Gastrocnemius medialis (tissue), 4 donors: ENCODE measurements at regions of chr11 and their contacts with region 1.

Region 1: DNA sequence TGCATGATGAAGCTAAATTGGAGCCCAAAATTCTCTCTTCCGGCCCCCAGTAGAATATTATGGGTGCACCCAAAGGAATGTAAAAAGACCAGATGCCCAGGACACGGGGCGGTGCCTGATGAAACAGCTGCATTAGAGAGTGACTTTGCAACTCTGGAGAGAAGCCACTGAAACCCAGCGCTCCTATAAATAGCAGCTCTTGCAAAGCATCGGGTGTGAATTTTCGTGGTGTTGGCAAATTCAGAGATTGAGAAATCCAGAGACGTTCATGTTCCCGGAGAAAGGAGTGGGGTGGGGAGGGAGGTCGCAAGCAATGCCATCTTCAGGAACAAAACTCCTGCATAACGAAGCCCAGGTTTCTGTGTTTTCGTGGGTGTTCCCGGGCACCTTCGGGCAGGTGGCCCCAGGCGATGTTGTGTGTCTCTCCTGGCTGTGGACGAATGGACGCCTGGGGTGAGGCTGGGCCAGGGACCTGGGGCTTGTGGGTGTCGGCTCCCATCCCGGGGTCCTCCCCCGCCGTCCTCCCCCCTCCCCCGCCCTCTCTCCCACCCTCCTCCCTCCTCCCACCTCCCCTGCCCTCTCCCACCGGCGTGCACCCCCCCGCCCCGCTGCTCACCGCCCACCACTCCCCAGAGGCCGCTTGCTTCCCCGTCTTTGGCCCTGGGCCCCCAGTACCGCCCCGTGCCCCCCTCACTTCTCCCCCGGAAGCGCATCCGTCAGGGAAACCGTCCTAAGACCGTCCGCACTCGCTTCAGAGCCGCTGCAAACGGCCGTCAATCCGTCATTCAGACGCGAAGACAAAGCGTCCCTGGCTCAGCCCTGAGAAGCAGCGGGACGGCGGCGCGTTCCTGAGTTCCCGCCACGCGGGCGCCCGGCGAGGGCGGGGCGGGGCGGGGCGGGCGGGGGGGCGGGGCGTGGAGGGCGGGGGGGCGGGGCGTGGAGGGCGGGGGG is 26.7 kb upstream of the TOLLIP start:
- DNase-seq: peak; percentile 91 to 96
- ATAC-seq: peak; percentile 95
- H3K4me3 ChIP-seq: peak overlapping the region; percentile 53 to 86 (median 61)
- H3K27ac ChIP-seq: peak overlapping the region; percentile 89 to 98 (median 94)
- H3K4me1 ChIP-seq: peaks cover 11 to 12% of the 10 kb centered on the region in 2 donors
- H3K27me3 ChIP-seq: peaks cover 0 to 2% (median 0%) of the 10 kb centered on the region in 3 donors
- CTCF ChIP-seq: no peak
- POLR2A ChIP-seq: peak; percentile 70 to 76

Region 2: GRCh38 chr11:1262172-1263006 is 73.7 kb before region 1 on chr11:
- in situ Hi-C with region 1: no loop called
- intact Hi-C with region 1: loop called (anchors 5 kb)
- DNase-seq: peak; percentile 86 to 91
- ATAC-seq: peak; percentile 84 to 94
- H3K4me3 ChIP-seq: peak overlapping the region; percentile 58 to 69 (median 64)
- H3K27ac ChIP-seq: peak overlapping the region; percentile 79 to 87 (median 83)
- H3K4me1 ChIP-seq: peaks cover 4 to 18% of the 10 kb centered on the region in 2 donors
- H3K27me3 ChIP-seq: no peaks in the 10 kb centered on the region
- CTCF ChIP-seq: no peak
- POLR2A ChIP-seq: peak; percentile 50 to 52

Region 3: GRCh38 chr11:1375161-1375954 is 39.3 kb after region 1 on chr11:
- in situ Hi-C with region 1: no loop called
- intact Hi-C with region 1: no loop called
- DNase-seq: no peak
- ATAC-seq: no peak
- H3K4me3 ChIP-seq: no peak overlapping the region
- H3K27ac ChIP-seq: no peak overlapping the region
- H3K4me1 ChIP-seq: no peaks in the 10 kb centered on the region
- H3K27me3 ChIP-seq: peaks cover 19 to 28% (median 27%) of the 10 kb centered on the region in 3 donors
- CTCF ChIP-seq: no peak
- POLR2A ChIP-seq: no peak

Region 4: GRCh38 chr11:1389103-1389931 is 53.2 kb after region 1 on chr11:
- in situ Hi-C with region 1: no loop called
- intact Hi-C with region 1: loop called (anchors 2 kb)
- DNase-seq: peak; percentile 94
- ATAC-seq: peak; percentile 96 to 98
- H3K4me3 ChIP-seq: peak overlapping the region; percentile 44 to 67 (median 50)
- H3K27ac ChIP-seq: peak overlapping the region in 1 of 4 donors; percentile 16
- H3K4me1 ChIP-seq: peaks cover 4 to 8% of the 10 kb centered on the region in 2 donors
- H3K27me3 ChIP-seq: peaks cover 45 to 50% (median 48%) of the 10 kb centered on the region in 3 donors
- CTCF ChIP-seq: peak in 1 of 5 experiments; percentile 32
- POLR2A ChIP-seq: no peak

Region 5: DNA sequence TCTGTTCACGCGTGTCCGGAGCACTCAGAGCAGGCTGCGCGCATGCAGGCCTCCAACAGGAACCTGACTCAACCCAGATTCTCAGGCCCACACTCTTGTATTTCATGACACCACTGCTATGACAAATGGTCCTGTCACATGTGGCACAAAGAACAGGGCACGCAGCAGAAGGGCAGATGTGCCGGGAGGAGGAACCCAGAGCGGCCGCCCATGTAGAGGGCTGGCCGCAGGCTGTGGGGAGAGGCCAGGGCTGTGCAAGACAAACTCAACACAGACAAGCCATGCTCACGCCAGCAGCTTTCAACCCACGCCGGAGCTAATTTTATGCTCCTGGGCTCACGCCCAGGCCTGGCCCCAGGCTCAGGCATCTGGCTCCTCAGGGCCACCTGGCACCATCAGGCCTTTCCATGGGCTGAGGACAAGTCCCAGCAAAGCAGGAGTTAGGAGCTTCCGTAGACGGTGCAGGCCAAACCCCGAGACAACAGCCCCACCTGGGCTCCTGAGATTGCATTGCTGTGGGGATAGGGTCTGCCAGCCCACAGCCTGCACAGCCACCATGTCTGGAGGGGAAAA is 196.0 kb after region 1 on chr11:
- in situ Hi-C with region 1: no loop called
- intact Hi-C with region 1: loop called (anchors 10 kb)
- DNase-seq: peak; percentile 74 to 93
- ATAC-seq: peak; percentile 90
- H3K4me3 ChIP-seq: peak overlapping the region in 2 of 4 donors; percentile 18 to 35
- H3K27ac ChIP-seq: peak overlapping the region; percentile 84 to 96 (median 90)
- H3K4me1 ChIP-seq: peaks cover 82 to 99% of the 10 kb centered on the region in 2 donors
- H3K27me3 ChIP-seq: no peaks in the 10 kb centered on the region
- CTCF ChIP-seq: no peak
- POLR2A ChIP-seq: peak; percentile 76 to 86